Mammary epithelial cell (primary cell): ENCODE measurements at regions of chr17 and their contacts with region 1.

Region 1: GRCh38 chr17:51153210-51154072 is at the start of gene NME1:
- DNase-seq: peak; percentile 99
- H3K4me3 ChIP-seq: peak within 1 kb of the TSS; percentile 69 to 88 (median 71)
- H3K27ac ChIP-seq: peak within 1 kb of the TSS; percentile 83
- H3K4me1 ChIP-seq: peaks cover 14% of the 10 kb centered on the region
- H3K27me3 ChIP-seq: no peaks in the 10 kb centered on the region
- CTCF ChIP-seq: peak; percentile 84 to 92
- total RNA-seq, gene NME1: 47.7 to 180 TPM

Region 2: DNA sequence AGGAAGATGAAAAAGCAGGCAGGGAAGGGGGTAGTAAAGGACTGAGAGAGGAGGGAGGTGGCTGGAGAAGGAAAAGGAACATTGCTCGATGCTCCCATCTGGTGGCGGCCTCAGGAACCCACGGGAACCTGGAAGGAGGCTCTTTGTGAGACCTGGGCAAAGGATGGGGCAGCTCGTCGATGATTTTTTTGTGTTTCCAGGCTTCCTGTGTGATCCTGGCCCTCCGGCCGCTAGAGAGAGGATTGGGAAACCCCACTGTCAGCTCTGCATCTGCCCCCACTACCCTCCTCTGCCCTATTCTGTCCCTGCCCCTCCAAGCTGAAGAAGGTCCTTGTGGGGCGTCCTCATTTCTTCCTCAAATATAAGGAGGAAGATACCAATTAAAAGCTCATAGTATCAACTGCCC is 311.5 kb before region 1 on chr17:
- CTCF ChIA-PET with region 1: no interaction called
- dilution Hi-C with region 1: no loop called
- in situ Hi-C with region 1: loop called in 1 of 2 experiments (anchors 25 kb)
- intact Hi-C with region 1: no loop called
- DNase-seq: peak; percentile 51
- H3K4me3 ChIP-seq: no peak overlapping the region
- H3K27ac ChIP-seq: no peak overlapping the region
- H3K4me1 ChIP-seq: peaks cover 28% of the 10 kb centered on the region
- H3K27me3 ChIP-seq: no peaks in the 10 kb centered on the region
- CTCF ChIP-seq: peak; percentile 86 to 92

Region 3: DNA sequence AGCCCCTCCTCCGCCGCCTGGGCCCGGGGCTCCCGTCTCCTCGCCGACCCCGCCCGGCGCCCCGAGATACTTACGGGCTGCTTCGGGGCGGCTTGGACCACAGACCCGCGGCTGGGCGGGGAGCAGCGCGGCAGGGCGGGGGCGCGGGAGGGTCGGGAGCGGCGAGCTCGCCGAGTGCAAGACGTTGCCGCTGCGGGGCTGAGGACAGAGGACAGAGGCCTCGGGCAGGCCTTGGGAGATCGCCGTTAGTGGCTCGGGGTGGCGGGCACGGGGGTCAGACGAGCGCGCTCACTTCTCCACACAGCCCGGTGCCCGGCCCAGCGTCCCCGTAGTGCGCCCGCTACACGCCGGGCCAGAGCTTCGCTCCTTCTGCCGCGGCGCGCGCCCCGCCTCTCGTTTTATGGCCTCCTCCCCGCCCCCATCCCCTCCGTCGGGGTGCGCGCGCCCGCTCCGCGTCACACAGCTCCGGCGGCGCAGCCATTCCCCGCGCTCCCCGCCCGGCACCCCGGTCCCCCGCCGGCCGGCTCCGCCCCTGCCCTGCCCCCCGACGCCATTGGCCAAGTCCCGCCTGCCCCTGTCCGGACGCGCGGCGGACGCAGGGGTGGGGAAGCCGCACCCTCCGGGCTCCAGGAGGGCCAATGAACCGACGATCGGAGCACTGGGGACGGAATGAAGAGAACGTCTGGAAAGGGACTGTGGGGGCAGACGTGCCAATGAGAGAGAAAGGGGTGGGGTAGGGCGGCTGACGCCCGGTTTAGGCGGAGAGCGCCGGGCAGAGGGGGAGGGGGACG is 287.3 kb before region 1 on chr17 and contains the start of gene TOB1:
- CTCF ChIA-PET with region 1: no interaction called
- dilution Hi-C with region 1: no loop called
- in situ Hi-C with region 1: no loop called
- intact Hi-C with region 1: loop called (anchors 1 kb)
- DNase-seq: peak; percentile 98
- H3K4me3 ChIP-seq: peak within 1 kb of the TSS; percentile 88 to 97 (median 94)
- H3K27ac ChIP-seq: peak within 1 kb of the TSS; percentile 97
- H3K4me1 ChIP-seq: peaks cover 16% of the 10 kb centered on the region
- H3K27me3 ChIP-seq: no peaks in the 10 kb centered on the region
- CTCF ChIP-seq: no peak
- total RNA-seq, gene TOB1: 51.2 to 149 TPM

Region 4: DNA sequence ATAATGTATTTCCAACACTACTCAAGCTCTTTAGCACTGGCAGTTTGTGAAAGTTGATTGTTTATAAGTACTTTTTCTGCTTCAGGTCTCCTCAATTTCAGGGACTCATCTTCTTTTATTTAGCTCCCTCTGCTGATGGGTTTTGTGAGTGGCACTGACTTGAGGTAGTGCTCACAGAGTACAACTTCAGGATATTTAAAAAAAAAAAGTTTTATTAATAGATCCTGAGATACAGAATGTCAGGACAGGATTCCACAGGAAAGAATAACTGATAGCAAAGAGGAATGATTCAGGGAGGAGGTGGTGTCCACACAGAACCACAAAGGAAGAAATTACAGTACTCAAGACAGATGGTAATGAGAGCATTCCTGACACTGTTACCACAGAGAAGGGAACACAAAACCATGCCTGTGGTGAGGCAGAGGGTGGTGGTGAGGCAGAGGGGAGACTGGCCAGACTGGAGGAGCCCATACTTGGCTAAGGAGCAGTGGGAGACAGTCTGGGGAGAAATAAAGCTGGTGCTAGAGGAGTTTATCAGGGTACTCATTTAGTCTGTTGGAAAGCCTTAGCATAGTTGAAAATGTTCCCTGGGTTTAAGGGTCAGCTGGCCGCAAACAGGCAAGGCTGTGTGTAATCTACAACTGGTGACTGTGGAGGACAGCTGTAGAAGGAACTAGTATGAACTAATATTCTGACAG is 96.5 kb before region 1 on chr17:
- CTCF ChIA-PET with region 1: interaction called, 9 read pairs
- dilution Hi-C with region 1: no loop called
- in situ Hi-C with region 1: no loop called
- intact Hi-C with region 1: loop called (anchors 1 kb)
- DNase-seq: peak; percentile 89
- H3K4me3 ChIP-seq: no peak overlapping the region
- H3K27ac ChIP-seq: peak overlapping the region; percentile 41
- H3K4me1 ChIP-seq: peaks cover 14% of the 10 kb centered on the region
- H3K27me3 ChIP-seq: no peaks in the 10 kb centered on the region
- CTCF ChIP-seq: peak; percentile 59 to 65

Region 5: DNA sequence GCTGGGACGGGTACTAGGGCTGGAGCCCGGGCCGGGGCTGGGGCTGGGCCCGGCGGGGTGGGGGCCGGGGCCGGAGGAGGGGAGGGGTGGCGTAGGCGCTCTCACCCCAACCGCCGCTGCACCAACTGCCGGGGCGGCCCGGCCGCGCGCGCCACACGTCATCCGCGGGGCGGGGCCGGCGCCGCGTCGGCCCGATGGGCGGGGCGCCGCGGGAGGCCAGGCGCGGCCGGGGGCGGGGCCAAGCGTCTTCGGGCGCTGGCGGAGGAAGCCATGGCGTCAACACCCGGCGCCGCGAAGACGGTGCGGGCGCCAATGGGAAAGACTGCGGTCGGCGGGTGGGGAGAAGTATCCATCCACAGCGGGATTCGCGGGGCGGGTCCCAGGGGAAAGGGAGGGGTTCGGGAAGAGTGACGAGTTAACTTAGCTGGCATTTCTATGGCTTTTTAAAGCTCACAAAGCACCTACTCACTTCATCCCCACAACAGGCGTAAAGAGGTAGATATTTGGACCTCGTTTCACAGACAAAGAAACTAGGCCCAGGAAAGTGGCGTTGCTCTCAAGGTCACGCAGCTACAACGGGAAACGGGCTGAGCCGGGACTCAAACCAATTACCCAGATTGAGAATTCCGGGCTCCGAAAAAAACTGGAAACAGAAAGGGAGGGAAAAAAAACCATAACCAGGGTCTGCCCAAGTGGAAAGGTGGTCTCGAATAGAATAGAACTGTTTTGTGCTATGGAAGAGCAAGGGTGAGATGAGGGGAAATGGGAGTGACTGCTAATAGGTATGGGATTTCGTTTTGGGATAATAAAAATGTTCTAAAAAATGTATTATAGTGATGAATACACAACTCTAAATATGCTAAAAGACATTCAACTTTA is 32.5 kb before region 1 on chr17 and contains the start of gene SPAG9:
- CTCF ChIA-PET with region 1: interaction called, 4 read pairs
- dilution Hi-C with region 1: no loop called
- in situ Hi-C with region 1: no loop called
- intact Hi-C with region 1: loop called (anchors 1 kb)
- DNase-seq: peak; percentile 97
- H3K4me3 ChIP-seq: peak within 1 kb of the TSS; percentile 66 to 100 (median 67)
- H3K27ac ChIP-seq: peak within 1 kb of the TSS; percentile 100
- H3K4me1 ChIP-seq: peaks cover 30% of the 10 kb centered on the region
- H3K27me3 ChIP-seq: no peaks in the 10 kb centered on the region
- CTCF ChIP-seq: no peak
- total RNA-seq, gene SPAG9: 80.4 to 95.3 TPM

Region 6: GRCh38 chr17:51214920-51215319 is 61.5 kb after region 1 on chr17:
- CTCF ChIA-PET with region 1: no interaction called
- dilution Hi-C with region 1: no loop called
- in situ Hi-C with region 1: no loop called
- intact Hi-C with region 1: no loop called
- DNase-seq: no peak
- H3K4me3 ChIP-seq: no peak overlapping the region
- H3K27ac ChIP-seq: no peak overlapping the region
- H3K4me1 ChIP-seq: no peaks in the 10 kb centered on the region
- H3K27me3 ChIP-seq: no peaks in the 10 kb centered on the region
- CTCF ChIP-seq: no peak

Region 7: GRCh38 chr17:51260125-51260880 is 106.9 kb after region 1 on chr17 and contains the start of gene UTP18:
- CTCF ChIA-PET with region 1: no interaction called
- dilution Hi-C with region 1: no loop called
- in situ Hi-C with region 1: no loop called
- intact Hi-C with region 1: loop called (anchors 1 kb)
- DNase-seq: peak; percentile 96
- H3K4me3 ChIP-seq: peak within 1 kb of the TSS; percentile 71 to 91 (median 78)
- H3K27ac ChIP-seq: peak within 1 kb of the TSS; percentile 91
- H3K4me1 ChIP-seq: peaks cover 37% of the 10 kb centered on the region
- H3K27me3 ChIP-seq: no peaks in the 10 kb centered on the region
- CTCF ChIP-seq: no peak
- total RNA-seq, gene UTP18: 25.0 to 37.3 TPM

Region 8: DNA sequence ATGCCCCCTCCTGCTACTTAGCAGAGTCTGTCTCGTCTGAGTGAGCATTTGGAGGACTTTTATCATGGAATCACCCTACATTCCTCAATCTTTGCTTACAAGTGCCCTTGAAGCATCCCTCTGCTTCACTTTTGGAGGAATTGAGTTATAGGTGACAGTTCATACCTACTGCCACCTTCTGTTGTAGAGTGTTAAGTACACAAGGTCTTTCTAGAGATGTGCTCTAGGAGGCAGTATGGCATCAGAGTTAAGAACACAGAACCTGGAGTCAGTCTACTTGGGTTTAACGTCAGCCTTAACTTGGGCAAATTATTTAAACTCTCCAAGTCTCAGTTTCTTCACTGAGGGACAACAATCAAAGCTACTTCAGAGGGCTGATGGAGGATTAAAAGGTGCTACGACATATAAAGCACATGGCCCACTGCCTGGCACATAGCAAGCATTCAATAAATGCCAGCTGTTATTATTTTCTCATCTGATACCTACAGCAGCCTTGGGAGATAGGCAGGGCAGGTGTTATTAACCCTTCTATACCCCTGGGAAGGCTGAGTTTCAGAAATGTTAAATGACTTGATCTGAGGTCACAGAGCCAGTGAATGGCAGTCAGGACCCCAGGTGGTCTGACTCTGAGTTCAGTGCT is 169.1 kb after region 1 on chr17:
- CTCF ChIA-PET with region 1: no interaction called
- dilution Hi-C with region 1: no loop called
- in situ Hi-C with region 1: no loop called
- intact Hi-C with region 1: no loop called
- DNase-seq: peak; percentile 39
- H3K4me3 ChIP-seq: no peak overlapping the region
- H3K27ac ChIP-seq: no peak overlapping the region
- H3K4me1 ChIP-seq: no peaks in the 10 kb centered on the region
- H3K27me3 ChIP-seq: no peaks in the 10 kb centered on the region
- CTCF ChIP-seq: peak; percentile 46 to 70